AG04450 (cell line): ENCODE measurements at regions of chr3 and their contacts with region 1.

Region 1: GRCh38 chr3:157067114-157067513 is 92.8 kb downstream of the CCNL1 start:
- DNase-seq: no peak
- H3K4me3 ChIP-seq: no peak overlapping the region
- H3K27ac ChIP-seq: peak overlapping the region; percentile 75
- H3K27me3 ChIP-seq: no peaks in the 10 kb centered on the region
- CTCF ChIP-seq: 0 out of 2 replicates have a peak, but pooled peaks have one; percentile 8

Region 2: DNA sequence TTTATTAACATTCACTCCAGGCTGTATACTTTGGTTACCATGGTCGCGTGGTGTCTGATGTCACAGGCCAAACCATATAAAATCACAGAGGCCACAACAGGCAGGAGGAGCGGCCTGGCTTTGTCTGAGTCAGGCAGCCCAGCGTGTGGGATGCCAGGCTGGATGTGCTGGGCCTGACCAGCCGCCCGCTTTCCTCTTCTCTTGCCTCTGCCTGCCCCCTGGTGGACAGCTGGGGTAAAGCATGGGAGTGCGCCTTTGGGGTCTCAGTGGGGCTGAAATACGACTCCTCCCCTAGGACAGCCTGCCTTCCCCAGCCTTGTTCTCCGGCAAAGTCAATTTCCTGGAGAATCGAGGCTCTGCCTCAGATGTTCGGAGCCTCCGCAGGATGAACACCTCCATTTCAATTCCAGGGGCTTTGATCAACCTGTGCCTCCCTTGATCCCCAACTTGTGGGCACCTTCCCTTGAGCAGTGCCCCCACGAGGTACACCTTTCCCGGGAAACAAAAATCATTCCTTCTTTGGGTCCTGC is 14.6 kb after region 1 on chr3:
- CTCF ChIA-PET with region 1: interaction called, 19 read pairs
- POLR2A ChIA-PET with region 1: no interaction called
- DNase-seq: peak; percentile 73
- H3K4me3 ChIP-seq: no peak overlapping the region
- H3K27ac ChIP-seq: no peak overlapping the region
- H3K27me3 ChIP-seq: no peaks in the 10 kb centered on the region
- CTCF ChIP-seq: peak; percentile 95

Region 3: DNA sequence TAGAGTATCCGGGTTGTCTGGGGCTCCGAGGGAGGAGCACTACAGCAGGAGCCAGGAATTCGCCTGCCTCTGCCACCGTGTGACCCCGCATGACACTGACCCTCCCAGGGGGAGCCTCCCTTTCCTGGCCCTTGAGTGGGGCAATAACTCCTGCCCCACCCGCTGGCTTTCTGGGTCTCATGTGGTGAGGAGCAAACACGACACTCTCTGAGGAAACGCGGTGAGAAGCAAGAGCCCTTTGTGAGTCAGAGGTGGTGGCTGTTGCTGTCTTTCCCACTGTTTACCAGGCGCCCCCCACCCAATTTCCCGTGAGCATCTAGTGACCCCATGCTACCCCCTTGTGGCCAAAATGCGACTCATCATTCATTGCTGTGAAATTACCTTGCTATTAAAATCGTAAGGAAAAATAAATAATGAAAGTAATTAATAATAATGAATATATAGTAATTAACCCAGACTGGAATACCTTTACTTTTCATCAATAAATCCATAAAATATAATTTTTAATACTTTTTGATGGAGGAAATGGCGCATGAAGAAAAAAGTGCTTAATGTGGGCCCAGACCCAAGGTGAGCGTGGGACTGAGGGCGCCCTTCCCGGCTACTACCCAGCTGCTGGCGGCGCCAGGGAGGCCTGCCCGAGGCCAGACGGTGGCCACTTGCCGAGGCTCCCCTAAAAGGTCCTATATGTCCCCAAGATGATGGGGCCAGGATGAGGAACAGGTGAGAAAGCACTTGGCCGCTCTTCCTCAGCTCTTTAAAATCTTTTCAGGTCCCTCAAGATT is 63.5 kb after region 1 on chr3:
- CTCF ChIA-PET with region 1: no interaction called
- POLR2A ChIA-PET with region 1: no interaction called
- DNase-seq: no peak
- H3K4me3 ChIP-seq: no peak overlapping the region
- H3K27ac ChIP-seq: peak overlapping the region; percentile 47
- H3K27me3 ChIP-seq: no peaks in the 10 kb centered on the region
- CTCF ChIP-seq: peak; percentile 67

Region 4: GRCh38 chr3:157226173-157226847 is 159.2 kb after region 1 on chr3:
- CTCF ChIA-PET with region 1: no interaction called
- POLR2A ChIA-PET with region 1: no interaction called
- DNase-seq: no peak
- H3K4me3 ChIP-seq: no peak overlapping the region
- H3K27ac ChIP-seq: no peak overlapping the region
- H3K27me3 ChIP-seq: no peaks in the 10 kb centered on the region
- CTCF ChIP-seq: no peak